OCI-LY7 (cell line): ENCODE measurements at regions of chr16 and their contacts with region 1.

Region 1: GRCh38 chr16:9090960-9091866 is at the start of gene HAPSTR1:
- DNase-seq: peak; percentile 100
- H3K4me3 ChIP-seq: peak within 1 kb of the TSS; percentile 92
- H3K27ac ChIP-seq: peak within 1 kb of the TSS; percentile 75
- H3K4me1 ChIP-seq: peaks cover 35% of the 10 kb centered on the region
- CTCF ChIP-seq: no peak
- total RNA-seq, gene HAPSTR1: 50.9 and 51.5 TPM in 2 replicates

Region 2: DNA sequence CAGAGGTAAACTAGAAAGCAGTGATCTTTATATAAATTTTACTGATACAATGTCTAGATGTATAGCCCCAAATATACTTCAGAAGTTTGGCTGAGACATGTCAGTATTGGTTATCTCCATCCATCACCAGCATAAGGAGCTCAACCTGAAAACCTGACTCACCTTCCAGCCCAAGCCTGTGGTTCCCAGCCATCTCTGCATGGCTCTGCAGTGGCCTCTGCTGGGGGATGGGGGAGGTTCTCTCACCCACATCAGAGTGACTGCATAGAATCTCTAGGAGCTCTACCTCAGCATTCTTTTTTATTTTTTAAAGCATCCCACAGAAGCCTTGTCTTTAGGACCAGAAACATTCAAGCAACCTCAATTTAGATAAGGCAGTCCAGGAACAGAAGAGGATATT is 154.8 kb before region 1 on chr16:
- CTCF ChIA-PET with region 1: no interaction called
- POLR2A ChIA-PET with region 1: interaction called, 10 read pairs
- intact Hi-C with region 1: no loop called
- DNase-seq: peak; percentile 66
- H3K4me3 ChIP-seq: no peak overlapping the region
- H3K27ac ChIP-seq: no peak overlapping the region
- H3K4me1 ChIP-seq: peaks cover 10% of the 10 kb centered on the region
- CTCF ChIP-seq: peak; percentile 82

Region 3: GRCh38 chr16:9053006-9053601 is 38.1 kb before region 1 on chr16:
- CTCF ChIA-PET with region 1: interaction called, 12 read pairs
- POLR2A ChIA-PET with region 1: no interaction called
- intact Hi-C with region 1: no loop called
- DNase-seq: peak; percentile 52
- H3K4me3 ChIP-seq: no peak overlapping the region
- H3K27ac ChIP-seq: no peak overlapping the region
- H3K4me1 ChIP-seq: peaks cover 15% of the 10 kb centered on the region
- CTCF ChIP-seq: no peak

Region 4: DNA sequence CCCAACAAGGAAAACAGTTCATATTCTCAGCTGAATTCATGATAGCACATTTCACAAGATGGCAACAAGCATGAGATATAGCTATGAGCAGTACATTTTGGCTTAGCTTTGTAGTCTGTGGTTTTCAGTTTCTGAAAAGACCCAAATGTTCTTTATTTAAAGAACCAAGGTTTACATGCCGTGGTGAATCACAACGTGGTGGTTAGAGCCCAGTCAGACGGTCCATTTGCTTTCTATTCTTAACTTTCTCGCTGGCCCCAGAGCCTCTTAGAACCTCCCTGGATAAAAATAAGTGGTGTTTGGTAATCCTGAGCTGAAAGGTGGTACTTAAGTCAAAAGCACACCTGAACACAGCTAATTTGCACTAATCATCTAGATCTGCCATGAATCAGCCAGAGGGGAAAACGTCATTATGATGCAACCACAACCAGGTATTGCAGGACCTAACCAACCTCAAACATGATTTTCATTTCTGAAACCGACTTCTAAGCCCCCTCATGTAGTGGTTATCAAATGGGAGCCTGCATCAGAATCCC is 18.3 kb before region 1 on chr16:
- CTCF ChIA-PET with region 1: interaction called, 5 read pairs
- POLR2A ChIA-PET with region 1: interaction called, 46 read pairs
- intact Hi-C with region 1: no loop called
- DNase-seq: peak; percentile 71
- H3K4me3 ChIP-seq: peak overlapping the region; percentile 13
- H3K27ac ChIP-seq: peak overlapping the region; percentile 62
- H3K4me1 ChIP-seq: peaks cover 38% of the 10 kb centered on the region
- CTCF ChIP-seq: no peak

Region 5: GRCh38 chr16:10743610-10744393 is 1652.6 kb after region 1 on chr16 and contains the start of gene NUBP1:
- CTCF ChIA-PET with region 1: no interaction called
- POLR2A ChIA-PET with region 1: no interaction called
- intact Hi-C with region 1: loop called (anchors 10 kb)
- DNase-seq: peak; percentile 95
- H3K4me3 ChIP-seq: peak within 1 kb of the TSS; percentile 70
- H3K27ac ChIP-seq: peak within 1 kb of the TSS; percentile 75
- H3K4me1 ChIP-seq: peaks cover 32% of the 10 kb centered on the region
- CTCF ChIP-seq: no peak
- total RNA-seq, gene NUBP1: 15.1 and 27.4 TPM in 2 replicates

Region 6: DNA sequence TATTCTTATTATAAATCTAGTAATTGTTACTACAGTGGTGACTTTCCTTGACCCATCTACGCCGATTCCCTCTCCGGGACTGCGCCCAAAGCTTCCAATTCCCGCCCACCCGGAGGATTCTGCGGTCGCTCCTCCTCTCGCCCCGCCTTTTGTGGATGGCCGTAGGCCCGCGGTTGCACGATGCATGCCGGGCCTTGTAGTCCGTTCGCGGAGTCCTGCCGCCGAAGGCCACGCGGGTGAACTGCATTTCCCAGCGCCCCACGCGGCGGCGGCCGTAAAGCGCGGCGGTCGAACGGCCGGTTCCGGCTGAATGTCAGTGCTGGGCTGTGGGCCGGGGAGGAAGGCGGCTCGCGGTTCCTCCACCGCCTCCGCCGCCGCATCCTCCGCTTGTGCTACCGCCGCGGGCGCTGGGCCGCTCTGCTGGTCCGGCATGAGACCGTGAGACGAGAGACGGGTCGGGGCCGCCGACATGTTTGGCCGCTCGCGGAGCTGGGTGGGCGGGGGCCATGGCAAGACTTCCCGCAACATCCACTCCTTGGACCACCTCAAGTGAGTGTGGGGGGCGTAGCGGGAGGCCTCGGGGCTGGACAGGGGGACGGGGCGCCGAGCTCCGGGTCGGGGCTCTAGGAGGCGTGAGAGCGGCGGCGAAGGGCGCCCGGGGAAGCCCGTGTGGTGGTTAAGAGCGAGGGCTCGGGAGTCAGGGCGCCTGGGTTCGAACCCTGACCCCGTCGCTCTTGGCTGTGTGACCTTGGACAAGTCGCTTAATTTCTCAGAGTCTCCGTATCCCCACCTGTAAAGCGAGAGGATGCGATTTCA is 1853.2 kb after region 1 on chr16 and contains the start of gene CLEC16A:
- CTCF ChIA-PET with region 1: no interaction called
- POLR2A ChIA-PET with region 1: no interaction called
- intact Hi-C with region 1: loop called (anchors 10 kb)
- DNase-seq: peak; percentile 97
- H3K4me3 ChIP-seq: peak within 1 kb of the TSS; percentile 85
- H3K27ac ChIP-seq: peak within 1 kb of the TSS; percentile 51
- H3K4me1 ChIP-seq: peaks cover 73% of the 10 kb centered on the region
- CTCF ChIP-seq: no peak
- total RNA-seq, gene CLEC16A: 26.2 and 31.1 TPM in 2 replicates